Right lobe of liver (tissue), 6 donors: ENCODE measurements at regions of chr7 and their contacts with region 1.

Region 1: GRCh38 chr7:131507592-131508331 is 48.7 kb downstream of the PODXL start:
- DNase-seq: peak; percentile 86 to 90 (median 87)
- ATAC-seq: peak; percentile 84 to 90 (median 88)
- H3K4me3 ChIP-seq: no peak overlapping the region
- H3K27ac ChIP-seq: no peak overlapping the region
- H3K4me1 ChIP-seq: peaks cover 0 to 18% (median 9%) of the 10 kb centered on the region in 4 donors
- H3K27me3 ChIP-seq: no peaks in the 10 kb centered on the region
- CTCF ChIP-seq: peak; percentile 87 to 95 (median 92)
- POLR2A ChIP-seq: no peak

Region 2: GRCh38 chr7:131443496-131443895 is 64.3 kb before region 1 on chr7:
- intact Hi-C with region 1: no loop called
- DNase-seq: no peak
- ATAC-seq: no peak
- H3K4me3 ChIP-seq: no peak overlapping the region
- H3K27ac ChIP-seq: no peak overlapping the region
- H3K4me1 ChIP-seq: no peaks in the 10 kb centered on the region
- H3K27me3 ChIP-seq: no peaks in the 10 kb centered on the region
- CTCF ChIP-seq: no peak
- POLR2A ChIP-seq: no peak

Region 3: DNA sequence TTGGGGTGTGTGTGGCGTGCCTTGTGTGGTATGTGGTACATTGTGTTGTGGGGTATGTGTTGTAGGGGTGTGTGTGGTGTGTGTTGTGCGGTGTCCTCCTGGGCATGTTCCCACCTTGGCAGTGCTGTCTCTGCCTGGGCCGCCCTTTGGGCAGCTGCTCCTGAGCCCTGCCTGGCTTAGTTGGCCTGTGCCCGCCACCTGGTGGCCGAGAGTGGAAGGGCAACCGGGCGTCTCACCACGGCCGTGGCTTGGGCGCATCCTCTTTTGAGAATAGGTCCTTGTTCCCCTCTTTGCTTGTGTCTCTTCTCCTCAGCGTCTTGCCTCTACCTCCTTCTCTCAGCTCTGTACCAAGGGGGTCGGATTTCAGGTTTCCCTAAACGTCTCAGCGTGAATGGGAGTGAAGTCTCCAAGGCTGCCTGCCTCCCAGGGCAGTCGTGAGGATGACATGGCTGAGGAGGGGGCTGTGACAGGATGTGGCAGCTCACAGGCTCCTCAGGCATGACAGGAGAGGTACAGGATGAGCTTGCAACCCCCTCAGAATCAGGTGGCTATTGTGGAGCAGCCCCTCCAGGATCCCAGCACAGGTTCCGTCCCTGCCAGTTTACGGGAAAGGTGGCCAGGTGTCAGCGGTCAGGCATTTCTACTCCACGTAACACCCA is 147.0 kb after region 1 on chr7:
- intact Hi-C with region 1: loop called (anchors 5 kb)
- DNase-seq: peak; percentile 84 to 87 (median 85)
- ATAC-seq: peak; percentile 95 to 98 (median 96)
- H3K4me3 ChIP-seq: no peak overlapping the region
- H3K27ac ChIP-seq: no peak overlapping the region
- H3K4me1 ChIP-seq: no peaks in the 10 kb centered on the region
- H3K27me3 ChIP-seq: no peaks in the 10 kb centered on the region
- CTCF ChIP-seq: peak; percentile 83 to 88 (median 85)
- POLR2A ChIP-seq: no peak

Region 4: GRCh38 chr7:131829947-131830558 is 322.3 kb after region 1 on chr7:
- intact Hi-C with region 1: no loop called
- DNase-seq: no peak
- ATAC-seq: peak in 1 of 4 donors; percentile 25
- H3K4me3 ChIP-seq: no peak overlapping the region
- H3K27ac ChIP-seq: no peak overlapping the region
- H3K4me1 ChIP-seq: no peaks in the 10 kb centered on the region
- H3K27me3 ChIP-seq: no peaks in the 10 kb centered on the region
- CTCF ChIP-seq: no peak
- POLR2A ChIP-seq: no peak